Left lung (tissue), 14 donors: ENCODE measurements at regions of chr2 and their contacts with region 1.

Region 1: DNA sequence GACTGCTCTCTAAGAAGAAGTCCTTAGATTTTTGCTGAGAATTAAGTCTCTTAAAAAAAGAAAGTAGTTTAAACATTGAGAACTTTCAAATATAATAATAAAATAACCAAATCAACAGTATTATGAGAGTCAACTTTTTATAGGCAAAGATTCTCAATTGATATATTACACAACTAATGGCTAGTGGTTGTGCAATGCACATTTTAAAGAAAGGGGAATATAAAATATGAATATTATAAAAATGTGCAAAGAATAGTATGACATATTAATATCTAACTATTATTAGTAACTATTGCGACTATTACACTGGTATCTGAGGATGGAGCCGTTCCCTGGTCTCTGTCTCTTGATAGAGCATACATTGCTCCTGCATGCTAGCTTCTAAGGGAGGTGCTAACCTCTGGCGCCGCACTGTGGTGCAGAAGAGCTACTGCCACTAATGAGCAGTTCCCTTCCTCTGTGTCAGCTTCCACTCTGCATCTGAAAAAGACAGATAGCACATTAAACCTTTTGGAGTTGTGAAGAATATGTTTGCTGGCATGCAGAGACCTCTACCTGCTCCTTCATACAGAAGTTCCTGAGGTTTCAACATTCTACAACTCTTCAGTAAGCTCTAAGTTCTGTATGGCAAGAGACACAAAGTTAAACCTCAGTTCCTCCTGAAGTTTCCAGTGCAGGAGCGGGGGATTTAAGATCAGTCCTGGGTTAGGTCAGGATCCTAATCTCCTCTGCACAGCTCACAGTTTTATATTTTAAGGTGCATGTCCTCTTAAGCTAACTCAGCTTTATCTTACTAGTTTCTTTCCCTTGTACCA is 3.5 kb upstream of the SLC9A2 start:
- DNase-seq: peak in 3 of 4 donors; percentile 58 to 86 (median 65)
- ATAC-seq: peak; percentile 86
- H3K4me3 ChIP-seq: no peak overlapping the region
- H3K27ac ChIP-seq: no peak overlapping the region
- H3K4me1 ChIP-seq: peaks cover 13 to 20% of the 10 kb centered on the region in 2 donors
- H3K27me3 ChIP-seq: peaks cover 37 to 75% of the 10 kb centered on the region in 2 donors
- CTCF ChIP-seq: peak; percentile 63 to 74

Region 2: DNA sequence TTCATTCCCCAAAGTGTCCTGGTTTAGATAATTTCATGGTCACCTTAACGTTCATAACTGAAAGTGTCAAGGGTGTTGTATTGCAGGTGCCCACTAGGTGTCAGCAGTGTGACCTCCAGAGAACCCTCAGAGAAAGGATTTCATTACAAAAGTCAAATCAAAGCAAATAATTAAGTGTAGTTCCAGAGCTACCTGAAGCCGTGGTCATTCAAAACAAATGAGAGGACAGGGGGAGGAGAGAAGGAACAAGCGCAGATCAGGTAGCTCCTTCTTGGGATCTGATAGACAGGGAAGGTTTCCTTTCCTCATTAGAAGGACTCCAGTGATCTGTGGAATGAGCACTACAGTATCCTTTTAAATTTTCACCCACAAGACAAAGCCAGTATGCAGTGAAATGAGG is 142.8 kb before region 1 on chr2 and contains the start of gene SLC9A4:
- intact Hi-C with region 1: loop called in 1 of 2 experiments (anchors 10 kb)
- DNase-seq: peak in 2 of 4 donors; percentile 13 to 44
- ATAC-seq: peak; percentile 94
- H3K4me3 ChIP-seq: no peak within 1 kb of the TSS
- H3K27ac ChIP-seq: no peak within 1 kb of the TSS
- H3K4me1 ChIP-seq: no peaks in the 10 kb centered on the region
- H3K27me3 ChIP-seq: no peaks in the 10 kb centered on the region
- CTCF ChIP-seq: peak; percentile 78 to 87
- polyA plus RNA-seq, gene SLC9A4: 0.06 to 0.08 (median 0.06) TPM in 4 of 6 donors, not detected in the others

Region 3: DNA sequence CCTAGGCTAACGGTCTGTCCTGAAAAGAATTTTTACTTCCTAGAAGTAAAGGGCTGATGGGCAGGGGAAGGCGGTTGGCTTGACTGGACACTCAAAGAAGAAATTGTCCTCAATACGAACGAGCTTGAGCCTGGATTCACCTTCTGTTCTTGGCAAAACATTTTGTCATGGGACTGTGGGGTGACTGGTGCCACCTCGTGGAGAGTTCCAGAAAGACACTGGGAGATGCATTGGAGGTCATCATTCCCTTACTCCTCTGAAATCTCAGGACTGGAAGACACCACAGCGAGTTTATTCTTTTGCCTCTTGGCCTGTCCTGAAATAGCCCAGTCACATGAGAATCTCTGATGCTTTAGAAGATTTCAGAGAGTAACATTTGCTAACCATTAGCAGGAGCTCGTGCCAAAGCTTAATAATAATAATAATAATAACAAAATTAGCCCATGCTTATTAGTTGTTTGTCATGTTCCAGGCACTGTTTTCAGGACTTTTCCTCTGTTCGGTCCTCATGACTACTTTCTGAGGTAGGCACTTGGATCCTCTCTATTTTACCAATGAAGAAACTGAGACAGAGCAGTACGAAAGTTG is 190.5 kb after region 1 on chr2:
- intact Hi-C with region 1: no loop called
- DNase-seq: peak in 3 of 4 donors; percentile 40 to 80 (median 67)
- ATAC-seq: peak; percentile 96
- H3K4me3 ChIP-seq: no peak overlapping the region
- H3K27ac ChIP-seq: no peak overlapping the region
- H3K4me1 ChIP-seq: no peaks in the 10 kb centered on the region
- H3K27me3 ChIP-seq: no peaks in the 10 kb centered on the region
- CTCF ChIP-seq: peak; percentile 69 to 70